Calu3 (cell line): ENCODE measurements at regions of chr14 and their contacts with region 1.

Region 1: DNA sequence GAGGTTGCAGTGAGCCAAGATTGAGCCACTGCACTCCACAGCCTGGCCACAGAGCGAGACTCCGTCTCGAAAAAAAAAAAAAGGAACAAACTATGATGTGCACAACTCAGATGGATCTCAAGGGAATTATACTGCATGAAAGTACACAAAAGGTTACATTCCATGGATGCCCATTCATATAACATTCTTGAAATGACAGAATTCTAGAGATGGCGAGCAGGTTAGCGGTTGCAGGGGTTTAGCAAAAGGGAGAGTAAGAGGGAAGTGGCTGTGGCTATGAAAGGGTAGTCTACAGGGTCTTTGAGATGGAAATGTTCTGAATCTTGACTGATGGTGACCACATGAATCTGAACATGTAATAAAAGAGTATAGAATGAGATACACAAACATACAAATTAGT is 49.7 kb downstream of the CKB start:
- DNase-seq: no peak
- H3K4me3 Mint-ChIP-seq: no peak overlapping the region
- H3K27ac Mint-ChIP-seq: no peak overlapping the region
- H3K4me1 Mint-ChIP-seq: no peaks in the 10 kb centered on the region
- H3K27me3 Mint-ChIP-seq: no peaks in the 10 kb centered on the region
- CTCF ChIP-seq: no peak

Region 2: GRCh38 chr14:102738756-102739494 is 734.0 kb before region 1 on chr14:
- CTCF ChIA-PET with region 1: no interaction called
- intact Hi-C with region 1: no loop called
- DNase-seq: no peak
- H3K4me3 Mint-ChIP-seq: no peak overlapping the region
- H3K27ac Mint-ChIP-seq: no peak overlapping the region
- H3K4me1 Mint-ChIP-seq: no peaks in the 10 kb centered on the region
- H3K27me3 Mint-ChIP-seq: no peaks in the 10 kb centered on the region
- CTCF ChIP-seq: no peak

Region 3: DNA sequence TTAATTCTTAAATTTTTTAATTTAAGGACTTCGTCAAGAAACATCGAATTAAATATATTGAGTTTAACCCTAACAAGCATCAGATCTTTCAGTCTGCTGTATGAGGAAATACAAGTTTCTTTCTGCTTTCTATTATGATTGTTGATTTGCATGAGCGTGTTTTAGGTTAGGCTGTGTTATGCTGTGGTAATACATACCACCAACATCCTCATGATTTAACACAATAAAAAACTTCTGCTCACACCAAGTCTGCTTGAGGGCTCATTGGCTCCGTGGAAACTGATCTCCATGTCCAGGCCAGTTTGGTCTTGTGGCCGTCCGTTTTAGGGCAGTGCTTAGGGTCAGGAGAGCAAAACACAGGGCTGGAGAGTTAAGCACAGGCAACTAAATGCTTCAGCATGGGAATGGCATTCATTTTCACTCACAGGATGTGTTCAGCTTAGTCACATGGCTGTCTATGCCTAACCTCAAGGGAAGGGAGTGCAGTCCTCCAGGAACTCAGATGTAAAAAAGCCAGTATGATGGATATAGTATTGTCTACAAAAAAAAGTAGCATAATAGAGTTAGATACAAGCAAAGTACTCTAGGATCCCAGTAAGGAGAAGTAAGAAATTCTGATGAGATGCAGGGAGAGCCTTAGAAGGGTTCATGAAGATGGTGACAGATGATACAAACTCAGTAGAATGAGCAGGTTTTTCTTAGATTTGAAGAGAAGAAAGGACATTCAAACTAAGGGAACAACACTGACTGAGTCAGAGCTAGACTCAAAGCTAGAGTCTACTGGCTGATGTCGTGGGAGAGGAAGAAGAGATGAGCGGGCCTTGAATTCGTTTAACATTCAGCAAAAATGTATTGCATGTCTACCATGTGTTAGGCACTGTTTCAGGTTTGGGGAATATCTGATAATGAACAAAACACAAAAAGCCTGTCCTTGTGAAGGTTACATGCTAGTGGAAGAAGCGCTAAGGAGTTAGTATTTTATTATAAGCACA is 71.4 kb before region 1 on chr14:
- CTCF ChIA-PET with region 1: no interaction called
- intact Hi-C with region 1: no loop called
- DNase-seq: no peak
- H3K4me3 Mint-ChIP-seq: peak overlapping the region; percentile 12
- H3K27ac Mint-ChIP-seq: peak overlapping the region; percentile 82
- H3K4me1 Mint-ChIP-seq: peaks cover 44% of the 10 kb centered on the region
- H3K27me3 Mint-ChIP-seq: no peaks in the 10 kb centered on the region
- CTCF ChIP-seq: no peak

Region 4: GRCh38 chr14:103427485-103428443 is 45.2 kb before region 1 on chr14:
- CTCF ChIA-PET with region 1: no interaction called
- intact Hi-C with region 1: loop called (anchors 2 kb)
- DNase-seq: no peak
- H3K4me3 Mint-ChIP-seq: no peak overlapping the region
- H3K27ac Mint-ChIP-seq: no peak overlapping the region
- H3K4me1 Mint-ChIP-seq: no peaks in the 10 kb centered on the region
- H3K27me3 Mint-ChIP-seq: no peaks in the 10 kb centered on the region
- CTCF ChIP-seq: no peak